CD4-positive, alpha-beta memory T cell (primary cell): ENCODE measurements at regions of chr17 and their contacts with region 1.

Region 1: DNA sequence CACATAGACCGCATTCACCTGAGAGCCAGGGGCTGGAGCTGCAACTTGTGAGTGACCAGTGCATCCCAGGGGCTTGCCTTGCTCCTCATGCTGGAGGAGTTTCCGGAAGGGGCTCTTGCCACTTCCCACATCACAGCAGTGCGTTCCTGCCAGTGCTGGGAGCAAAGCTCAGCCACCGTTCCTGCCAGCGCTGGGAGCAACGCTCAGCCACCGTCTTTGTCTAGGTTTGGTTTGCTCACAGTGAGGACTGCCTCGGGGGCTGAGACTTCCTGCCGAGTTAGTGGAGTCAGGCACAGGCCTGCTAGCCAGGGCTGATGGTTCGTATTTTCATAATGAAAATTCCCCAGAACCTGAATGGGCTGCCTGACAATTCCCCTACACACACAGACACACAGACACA is 5.4 kb upstream of the CHRNE start:
- DNase-seq: no peak
- H3K4me3 ChIP-seq: no peak overlapping the region
- H3K4me3 Mint-ChIP-seq: no peak overlapping the region
- H3K27ac ChIP-seq: peak overlapping the region; percentile 5
- H3K27ac Mint-ChIP-seq: no peak overlapping the region
- H3K4me1 ChIP-seq: peaks cover 22% of the 10 kb centered on the region
- H3K4me1 Mint-ChIP-seq: peaks cover 4 to 11% (median 6%) of the 10 kb centered on the region in 4 donors
- H3K27me3 ChIP-seq: no peaks in the 10 kb centered on the region
- H3K27me3 Mint-ChIP-seq: no peaks in the 10 kb centered on the region

Region 2: GRCh38 chr17:4771519-4772234 is 136.6 kb before region 1 on chr17 and contains the start of gene TM4SF5:
- CTCF ChIA-PET with region 1: no interaction called
- POLR2A ChIA-PET with region 1: no interaction called
- intact Hi-C with region 1: no loop called
- DNase-seq: no peak
- H3K4me3 ChIP-seq: no peak within 1 kb of the TSS
- H3K4me3 Mint-ChIP-seq: peak within 1 kb of the TSS in 2 of 8 donors; percentile 40 to 58
- H3K27ac ChIP-seq: no peak within 1 kb of the TSS
- H3K27ac Mint-ChIP-seq: peak within 1 kb of the TSS in 1 of 7 donors; percentile 62
- H3K4me1 ChIP-seq: peaks cover 7% of the 10 kb centered on the region
- H3K4me1 Mint-ChIP-seq: peaks cover 7 to 15% (median 9%) of the 10 kb centered on the region in 4 donors
- H3K27me3 ChIP-seq: no peaks in the 10 kb centered on the region
- H3K27me3 Mint-ChIP-seq: peaks cover 1 to 7% of the 10 kb centered on the region in 2 donors
- total RNA-seq, gene TM4SF5: not detected

Region 3: DNA sequence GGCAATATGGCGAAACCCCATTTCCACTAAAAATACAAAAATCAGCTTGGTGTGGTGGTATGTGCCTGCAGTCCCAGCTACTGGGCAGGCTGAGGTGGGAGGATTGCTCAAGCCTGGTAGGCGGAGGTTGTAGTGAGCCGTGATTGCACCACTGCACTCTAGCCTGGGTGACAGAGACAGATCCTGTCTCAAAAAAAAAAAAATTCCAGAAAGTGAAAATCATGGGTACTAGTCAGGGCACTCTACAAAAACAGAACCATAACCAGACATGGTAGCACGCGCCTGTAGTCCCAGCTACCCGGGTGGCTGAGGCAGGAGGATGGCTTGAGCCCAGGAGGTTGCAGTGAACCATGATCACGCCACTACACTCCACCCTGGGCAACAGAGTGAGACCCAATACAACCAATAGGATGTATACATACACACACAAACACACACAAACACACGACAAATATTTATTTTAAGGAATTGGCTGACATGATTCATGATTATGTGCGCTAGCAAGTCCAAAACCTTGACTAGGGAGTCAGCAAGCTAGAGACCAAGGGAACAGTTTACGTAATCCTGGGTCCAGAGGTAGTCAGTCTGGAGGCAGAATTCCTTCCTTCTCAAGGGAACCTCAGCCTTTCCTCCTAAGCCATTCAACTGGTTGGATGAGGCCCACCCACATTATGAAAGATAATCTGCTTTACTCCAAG is 12.2 kb after region 1 on chr17:
- CTCF ChIA-PET with region 1: interaction called, 14 read pairs
- POLR2A ChIA-PET with region 1: no interaction called
- intact Hi-C with region 1: no loop called
- DNase-seq: no peak
- H3K4me3 ChIP-seq: no peak overlapping the region
- H3K4me3 Mint-ChIP-seq: no peak overlapping the region
- H3K27ac ChIP-seq: no peak overlapping the region
- H3K27ac Mint-ChIP-seq: no peak overlapping the region
- H3K4me1 ChIP-seq: no peaks in the 10 kb centered on the region
- H3K4me1 Mint-ChIP-seq: no peaks in the 10 kb centered on the region
- H3K27me3 ChIP-seq: no peaks in the 10 kb centered on the region
- H3K27me3 Mint-ChIP-seq: no peaks in the 10 kb centered on the region

Region 4: GRCh38 chr17:4939796-4940624 is 31.7 kb after region 1 on chr17 and contains the starts of genes RNF167 and SLC25A11:
- CTCF ChIA-PET with region 1: interaction called, 15 read pairs
- POLR2A ChIA-PET with region 1: interaction called, 40 read pairs
- intact Hi-C with region 1: loop called (anchors 2 kb)
- DNase-seq: peak; percentile 96 to 99 (median 99)
- H3K4me3 ChIP-seq: peak within 1 kb of the TSS; percentile 99
- H3K4me3 Mint-ChIP-seq: peak within 1 kb of the TSS; percentile 95 to 100 (median 98)
- H3K27ac ChIP-seq: peak within 1 kb of the TSS; percentile 81
- H3K27ac Mint-ChIP-seq: peak within 1 kb of the TSS; percentile 92 to 100 (median 98)
- H3K4me1 ChIP-seq: peaks cover 57% of the 10 kb centered on the region
- H3K4me1 Mint-ChIP-seq: peaks cover 43 to 72% (median 55%) of the 10 kb centered on the region in 4 donors
- H3K27me3 ChIP-seq: no peaks in the 10 kb centered on the region
- H3K27me3 Mint-ChIP-seq: no peaks in the 10 kb centered on the region
- total RNA-seq, gene RNF167: 154 to 172 TPM
- total RNA-seq, gene SLC25A11: 43.5 to 49.5 TPM

Region 5: GRCh38 chr17:4956493-4957061 is 48.3 kb after region 1 on chr17:
- CTCF ChIA-PET with region 1: interaction called, 33 read pairs
- POLR2A ChIA-PET with region 1: interaction called, 3 read pairs
- intact Hi-C with region 1: loop called (anchors 1 kb)
- DNase-seq: peak in 2 of 5 donors; percentile 29 to 35
- H3K4me3 ChIP-seq: no peak overlapping the region
- H3K4me3 Mint-ChIP-seq: no peak overlapping the region
- H3K27ac ChIP-seq: no peak overlapping the region
- H3K27ac Mint-ChIP-seq: peak overlapping the region in 1 of 7 donors; percentile 50
- H3K4me1 ChIP-seq: no peaks in the 10 kb centered on the region
- H3K4me1 Mint-ChIP-seq: peaks cover 4 to 17% (median 10%) of the 10 kb centered on the region in 4 donors
- H3K27me3 ChIP-seq: no peaks in the 10 kb centered on the region
- H3K27me3 Mint-ChIP-seq: no peaks in the 10 kb centered on the region

Region 6: DNA sequence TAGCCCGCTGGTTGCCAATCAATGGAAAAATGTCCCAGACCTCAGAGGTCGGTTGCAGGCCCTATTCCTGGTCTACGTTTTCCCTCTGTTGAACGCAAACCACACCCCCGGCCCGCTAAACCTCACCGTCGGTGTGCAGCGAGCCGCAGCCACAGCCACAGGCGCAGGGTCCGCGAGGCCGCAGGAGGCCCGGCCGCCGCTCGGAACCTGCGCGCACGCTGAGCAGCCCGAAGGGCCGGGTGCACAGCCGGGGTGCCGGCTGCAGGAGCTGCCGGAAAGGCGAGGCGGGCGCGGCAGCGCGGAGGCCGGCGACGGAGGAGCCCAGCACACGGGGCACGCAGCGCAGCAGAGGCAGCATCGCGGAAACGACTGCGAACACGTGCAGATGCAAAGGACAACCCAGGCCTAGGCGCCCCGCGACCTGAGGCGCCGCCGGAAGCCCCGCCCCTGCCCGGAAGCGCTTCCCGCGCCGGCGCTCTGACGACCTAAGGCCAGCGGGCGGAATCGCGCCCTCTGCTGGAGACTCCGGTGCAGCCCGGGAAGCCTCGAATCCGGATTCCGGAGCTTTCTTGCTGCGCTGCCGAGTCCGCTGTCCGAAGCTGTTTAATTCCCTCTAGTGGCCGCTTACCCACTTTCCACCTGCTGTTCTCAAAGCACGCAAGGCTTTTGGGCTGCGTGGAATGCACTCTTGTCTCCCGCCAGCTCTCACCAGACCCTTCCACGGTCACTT is 530.6 kb after region 1 on chr17 and contains the start of gene C1QBP:
- CTCF ChIA-PET with region 1: no interaction called
- POLR2A ChIA-PET with region 1: no interaction called
- intact Hi-C with region 1: no loop called
- DNase-seq: peak; percentile 91 to 93 (median 92)
- H3K4me3 ChIP-seq: peak within 1 kb of the TSS; percentile 68 to 74
- H3K4me3 Mint-ChIP-seq: peak within 1 kb of the TSS; percentile 83 to 94 (median 88)
- H3K27ac ChIP-seq: peak within 1 kb of the TSS; percentile 80
- H3K27ac Mint-ChIP-seq: peak within 1 kb of the TSS; percentile 91 to 98 (median 95)
- H3K4me1 ChIP-seq: peaks cover 34% of the 10 kb centered on the region
- H3K4me1 Mint-ChIP-seq: peaks cover 21 to 47% (median 30%) of the 10 kb centered on the region in 4 donors
- H3K27me3 ChIP-seq: no peaks in the 10 kb centered on the region
- H3K27me3 Mint-ChIP-seq: no peaks in the 10 kb centered on the region
- total RNA-seq, gene C1QBP: 73.1 to 78.9 TPM